ENCODE measurements at regions of chr10 and their contacts with region 1.

Region 1: DNA sequence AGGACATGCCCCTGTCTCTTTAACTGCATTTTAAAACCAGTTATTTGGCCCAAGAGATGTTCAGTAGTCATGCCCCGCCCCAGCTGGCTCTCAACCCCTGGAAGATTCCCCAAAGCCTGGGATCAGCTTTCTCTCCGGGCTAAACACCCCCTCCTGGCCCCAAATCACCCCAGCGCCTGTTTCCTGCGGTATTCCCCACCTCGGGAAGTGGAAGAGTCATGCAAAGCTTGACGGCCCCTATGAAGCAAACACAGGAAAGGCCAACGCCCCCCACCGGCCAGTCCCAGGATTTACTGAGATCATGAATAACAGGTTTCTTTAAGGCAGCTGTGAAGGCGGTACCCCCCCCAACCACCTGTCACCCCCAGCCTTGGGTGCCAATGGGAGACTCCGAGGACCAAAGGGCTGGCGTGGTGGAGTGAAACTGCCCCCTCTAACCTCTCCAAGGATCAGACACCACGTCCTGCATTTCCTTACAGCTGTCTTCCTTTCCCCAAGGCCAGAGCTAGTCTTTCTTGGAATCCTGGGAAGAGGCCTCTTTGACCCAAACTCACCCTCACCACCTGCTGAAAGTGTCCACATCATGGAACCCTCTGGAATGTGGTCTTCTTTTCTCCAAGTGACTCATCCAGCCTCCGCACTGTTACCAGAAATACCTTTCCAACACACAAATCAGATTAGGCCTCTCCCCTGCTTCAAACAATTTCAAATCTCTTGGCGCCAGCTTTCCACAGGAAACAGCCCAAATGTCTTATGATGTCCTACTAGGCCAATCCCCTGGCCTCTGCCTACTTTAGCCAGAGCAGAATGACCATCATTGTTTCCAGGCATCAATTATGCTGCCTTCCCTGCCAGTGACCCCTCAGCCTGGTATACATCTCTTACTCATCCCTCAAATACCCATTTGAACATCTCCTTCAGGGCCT is 301.5 kb downstream of the ZEB1 start:
- DNase-seq: peak; percentile 36 to 84
- H3K4me3 ChIP-seq: no peak overlapping the region
- H3K27ac ChIP-seq: no peak overlapping the region
- H3K4me1 ChIP-seq: peaks cover 0 to 2% (median under 1%) of the 10 kb centered on the region in 4 experiments; a peak in 4 of 7 replicates
- H3K27me3 ChIP-seq: no peaks in the 10 kb centered on the region
- CTCF ChIP-seq: peak; percentile 55 to 60 (median 58); a peak in 3 of 4 replicates
- EP300 ChIP-seq: no peak
- POLR2A ChIP-seq: no peak
- RAD21 ChIP-seq: peak; percentile 43 to 63; a peak in 3 of 4 replicates

Region 2: DNA sequence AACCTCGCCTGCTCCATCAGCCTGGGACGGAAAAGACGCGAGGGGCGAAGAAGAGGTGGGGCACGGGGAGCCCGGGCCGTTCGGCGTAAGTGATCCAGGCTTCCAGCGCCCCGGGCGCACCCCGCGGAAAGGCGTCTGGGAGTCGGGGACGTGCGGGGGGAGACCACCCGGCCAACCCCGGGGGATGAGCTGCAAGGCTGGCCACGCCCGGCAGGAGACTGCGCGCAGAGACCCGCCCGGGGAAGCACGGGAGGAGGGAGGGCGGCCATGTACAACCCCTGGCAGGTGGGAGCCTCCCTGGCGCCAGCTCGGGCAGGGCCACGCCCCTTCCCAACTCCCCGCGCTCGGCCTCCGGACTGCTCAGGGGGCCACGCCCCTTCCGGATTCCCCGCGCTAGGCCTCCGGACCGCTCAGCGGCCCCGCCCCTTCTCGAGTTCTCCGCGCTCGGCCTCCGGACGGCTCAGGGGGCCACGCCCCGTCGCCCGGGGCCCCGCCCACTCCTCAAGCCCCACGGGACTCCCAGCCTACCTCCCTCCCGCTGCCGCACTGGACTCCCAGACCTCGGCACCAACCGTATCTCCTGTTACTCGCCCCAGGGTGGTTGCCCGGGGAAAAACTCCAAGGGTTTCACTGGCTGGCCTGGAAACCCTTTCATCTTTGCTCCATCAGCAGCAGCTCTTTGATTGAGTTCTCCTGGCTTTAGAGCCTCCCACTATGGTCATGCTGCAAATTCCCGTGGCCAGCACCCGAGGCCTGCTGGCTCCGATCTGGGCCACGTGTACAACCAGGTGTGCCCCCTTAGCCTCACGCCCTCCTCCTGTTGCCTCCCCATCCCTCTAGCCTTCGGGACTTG is 17.0 kb before region 1 on chr10:
- CTCF ChIA-PET with region 1: interaction called, 39 read pairs
- POLR2A ChIA-PET with region 1: no interaction called
- DNase-seq: peak; percentile 90 to 96
- H3K4me3 ChIP-seq: peak overlapping the region; percentile 68 to 81 (median 74)
- H3K27ac ChIP-seq: peak overlapping the region; percentile 53; the same call in 1 of the 2 replicates
- H3K4me1 ChIP-seq: peaks cover 2 to 9% (median 5%) of the 10 kb centered on the region in 4 experiments
- H3K27me3 ChIP-seq: no peaks in the 10 kb centered on the region
- CTCF ChIP-seq: no peak
- EP300 ChIP-seq: no peak
- POLR2A ChIP-seq: peak in 1 of 2 experiments; percentile 77; a peak in 2 of 3 replicates
- RAD21 ChIP-seq: no peak; a peak in 1 of 4 replicates

Region 3: DNA sequence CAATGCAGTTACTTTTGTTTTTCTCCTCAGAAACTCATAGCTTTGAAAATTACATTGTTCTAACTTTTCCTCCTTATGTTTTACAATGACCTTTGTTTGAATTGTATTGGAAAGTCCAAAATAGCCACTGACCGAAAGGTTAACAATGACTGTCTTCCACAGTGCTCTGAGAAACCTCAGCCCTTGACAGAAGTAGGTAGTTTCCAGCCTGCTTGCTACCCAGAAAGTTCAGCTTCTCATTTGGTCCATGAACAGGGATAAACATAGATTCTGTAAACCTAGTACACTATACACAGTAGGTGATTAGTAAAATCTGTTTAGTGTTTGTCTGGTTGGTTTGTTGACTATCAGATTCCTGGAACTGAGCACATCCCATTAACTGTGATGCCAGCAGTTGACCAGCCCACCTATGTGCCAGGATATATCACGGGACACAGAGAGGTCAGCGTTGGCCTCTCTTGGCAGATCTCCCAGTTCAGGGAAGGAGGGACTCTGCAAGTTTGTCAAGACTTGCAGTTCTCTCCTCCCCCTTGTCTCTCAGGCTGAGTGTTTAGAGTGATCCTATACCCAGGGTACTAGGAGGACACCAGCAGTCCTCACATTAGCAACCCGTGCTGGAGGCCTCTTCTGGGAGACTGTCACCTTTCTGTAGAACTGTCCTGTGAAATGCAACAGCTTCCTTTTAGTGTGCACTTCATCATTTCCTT is 10.5 kb after region 1 on chr10:
- CTCF ChIA-PET with region 1: interaction called, 17 read pairs
- POLR2A ChIA-PET with region 1: no interaction called
- DNase-seq: no peak
- H3K4me3 ChIP-seq: no peak overlapping the region
- H3K27ac ChIP-seq: no peak overlapping the region
- H3K4me1 ChIP-seq: no peaks in the 10 kb centered on the region
- H3K27me3 ChIP-seq: no peaks in the 10 kb centered on the region
- CTCF ChIP-seq: no peak
- EP300 ChIP-seq: no peak
- POLR2A ChIP-seq: no peak
- RAD21 ChIP-seq: no peak

Measured in H1 (cell line).